ENCODE measurements at regions of chr15 and their contacts with region 1.

Region 1: GRCh38 chr15:68304589-68305337 is 27.2 kb downstream of the FEM1B start:
- DNase-seq: peak; percentile 46
- ATAC-seq: peak; percentile 68
- H3K4me3 Mint-ChIP-seq: no peak overlapping the region
- H3K27ac Mint-ChIP-seq: peak overlapping the region; percentile 55
- H3K4me1 Mint-ChIP-seq: peaks cover 39% of the 10 kb centered on the region
- H3K27me3 Mint-ChIP-seq: no peaks in the 10 kb centered on the region
- CTCF ChIP-seq: no peak

Region 2: GRCh38 chr15:67992834-67993233 is 311.9 kb before region 1 on chr15:
- CTCF ChIA-PET with region 1: no interaction called
- POLR2A ChIA-PET with region 1: no interaction called
- DNase-seq: no peak
- ATAC-seq: peak; percentile 39; the same call in 1 of the 2 replicates
- H3K4me3 Mint-ChIP-seq: no peak overlapping the region
- H3K27ac Mint-ChIP-seq: no peak overlapping the region
- H3K4me1 Mint-ChIP-seq: no peaks in the 10 kb centered on the region
- H3K27me3 Mint-ChIP-seq: peaks cover 3% of the 10 kb centered on the region; the same call in 1 of the 2 replicates
- CTCF ChIP-seq: no peak

Region 3: DNA sequence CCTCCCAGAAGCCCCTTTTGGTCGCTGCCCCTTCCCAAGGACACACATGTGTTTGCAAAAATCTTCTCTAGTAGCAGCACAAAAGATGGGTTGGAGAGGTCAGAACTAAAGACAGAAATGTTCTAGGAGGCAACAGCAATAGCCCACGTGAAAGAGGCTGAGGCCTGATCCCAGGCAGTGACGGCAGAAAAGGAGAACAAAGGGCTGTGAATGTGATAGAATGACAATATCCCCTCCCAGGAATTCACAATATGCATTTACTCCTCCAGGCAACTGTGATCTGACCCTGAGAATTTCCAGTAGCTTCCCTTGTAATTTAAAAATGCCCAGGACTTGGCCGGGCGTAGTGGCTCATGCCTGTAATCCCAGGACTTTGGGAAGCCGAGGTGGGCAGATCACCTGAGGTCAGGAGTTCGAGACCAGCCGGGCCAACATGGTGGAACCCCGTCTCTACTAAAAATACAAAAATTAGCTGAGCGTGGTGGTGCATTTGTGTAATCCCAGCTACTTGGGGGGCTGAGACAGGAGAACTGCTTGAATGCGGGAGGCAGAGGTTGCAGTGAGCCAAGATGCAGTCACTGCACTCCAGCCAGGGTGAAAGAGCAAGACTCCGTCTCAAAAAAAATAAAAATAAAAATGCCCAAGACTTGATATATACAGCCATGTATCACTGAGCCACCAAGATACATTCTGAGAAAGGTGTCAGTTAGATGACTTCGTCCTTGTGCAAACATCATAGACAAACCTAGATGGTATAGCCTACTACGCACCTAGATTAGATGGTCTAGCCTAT is 294.2 kb before region 1 on chr15:
- CTCF ChIA-PET with region 1: no interaction called
- POLR2A ChIA-PET with region 1: no interaction called
- DNase-seq: no peak
- ATAC-seq: peak; percentile 88
- H3K4me3 Mint-ChIP-seq: no peak overlapping the region
- H3K27ac Mint-ChIP-seq: peak overlapping the region; percentile 46; the same call in 1 of the 2 replicates
- H3K4me1 Mint-ChIP-seq: peaks cover 28% of the 10 kb centered on the region
- H3K27me3 Mint-ChIP-seq: no peaks in the 10 kb centered on the region; the same call in 1 of the 2 replicates
- CTCF ChIP-seq: no peak

Region 4: GRCh38 chr15:68177742-68178141 is 127.0 kb before region 1 on chr15:
- CTCF ChIA-PET with region 1: no interaction called
- POLR2A ChIA-PET with region 1: no interaction called
- DNase-seq: no peak
- ATAC-seq: no peak
- H3K4me3 Mint-ChIP-seq: no peak overlapping the region
- H3K27ac Mint-ChIP-seq: peak overlapping the region; percentile 50; the same call in 1 of the 2 replicates
- H3K4me1 Mint-ChIP-seq: no peaks in the 10 kb centered on the region
- H3K27me3 Mint-ChIP-seq: no peaks in the 10 kb centered on the region
- CTCF ChIP-seq: no peak

Region 5: DNA sequence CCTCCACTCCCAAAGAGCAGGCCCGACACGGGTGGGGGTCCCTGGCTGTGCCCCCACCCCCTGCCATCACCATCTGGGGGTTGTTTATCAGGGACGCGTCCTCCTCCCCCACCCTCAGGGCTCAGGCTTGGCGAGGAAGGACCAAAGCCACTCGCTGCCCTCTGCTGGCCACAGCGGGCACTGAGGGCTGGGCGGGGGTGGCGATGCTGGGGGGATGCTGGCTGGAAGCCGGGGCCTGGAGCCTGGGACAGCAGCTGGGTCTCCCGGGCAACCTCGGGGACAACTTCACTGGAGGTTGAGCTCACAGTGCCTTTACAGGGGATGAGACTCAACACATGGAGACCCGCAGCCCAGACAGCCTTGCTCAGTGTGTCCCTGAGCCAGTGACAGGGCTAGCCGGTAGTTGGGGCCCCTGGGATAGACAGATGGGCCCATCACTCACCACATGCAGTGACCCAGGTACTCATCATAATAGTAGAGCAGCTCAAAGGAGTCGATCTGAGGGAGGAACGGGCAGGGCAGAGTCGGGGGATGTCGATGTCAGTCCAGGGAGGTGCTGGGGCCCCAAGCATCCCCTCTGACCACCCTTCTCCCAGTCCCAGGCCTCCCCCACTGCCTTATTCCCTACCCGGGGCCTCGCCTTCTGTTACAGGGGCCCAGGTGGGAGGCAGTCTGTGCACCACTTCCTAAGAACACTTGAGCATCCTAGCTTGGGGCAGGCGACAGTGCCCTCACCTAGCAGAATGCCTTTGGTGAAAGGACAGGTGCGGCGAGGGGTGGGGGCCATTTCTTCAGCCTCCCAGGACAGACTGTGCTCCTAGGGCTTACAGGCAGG is 93.7 kb before region 1 on chr15:
- CTCF ChIA-PET with region 1: interaction called, 15 read pairs
- POLR2A ChIA-PET with region 1: no interaction called
- DNase-seq: peak; percentile 87
- ATAC-seq: peak; percentile 71
- H3K4me3 Mint-ChIP-seq: no peak overlapping the region
- H3K27ac Mint-ChIP-seq: no peak overlapping the region
- H3K4me1 Mint-ChIP-seq: peaks cover 16% of the 10 kb centered on the region
- H3K27me3 Mint-ChIP-seq: no peaks in the 10 kb centered on the region
- CTCF ChIP-seq: peak; percentile 75

Region 6: DNA sequence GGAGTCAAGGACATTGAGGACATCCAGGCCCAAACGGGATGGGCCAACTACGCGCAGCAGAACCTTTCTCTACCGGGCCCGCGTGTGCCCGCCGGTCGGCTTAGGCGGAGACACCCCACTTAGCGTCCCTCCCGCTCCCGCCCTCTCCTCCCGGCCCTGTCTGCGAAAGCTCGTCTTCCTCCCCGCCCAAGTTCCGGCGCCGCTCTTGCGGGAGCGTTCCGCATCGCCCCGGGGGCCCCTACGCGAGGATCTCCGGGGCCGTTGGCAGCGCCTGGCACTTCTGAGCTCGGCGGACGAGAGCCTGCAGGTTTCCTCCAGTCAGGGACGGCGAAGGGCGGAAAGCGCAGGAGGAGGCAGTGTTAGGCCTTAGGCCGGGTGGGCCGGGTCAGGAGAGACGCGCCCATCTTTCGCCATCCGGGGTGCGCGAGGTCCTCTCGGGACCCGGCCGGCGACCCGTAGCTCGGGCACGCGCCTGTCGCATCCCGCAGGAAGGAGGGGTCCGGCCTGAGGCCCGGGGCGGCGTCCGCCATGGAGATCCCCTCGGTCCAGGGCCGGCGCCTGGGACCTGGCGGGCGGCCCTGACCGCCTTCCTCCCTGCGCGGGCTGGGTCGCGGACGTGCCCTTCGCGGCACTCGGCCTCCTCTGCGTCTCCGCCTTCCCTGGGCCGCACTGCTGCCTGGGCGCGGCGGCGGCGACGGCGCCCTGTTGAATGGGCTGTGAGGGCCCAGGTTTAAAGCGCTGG is 27.0 kb before region 1 on chr15 and contains the start of gene FEM1B:
- CTCF ChIA-PET with region 1: interaction called, 28 read pairs
- POLR2A ChIA-PET with region 1: interaction called, 9 read pairs
- DNase-seq: peak; percentile 84
- ATAC-seq: peak; percentile 81
- H3K4me3 Mint-ChIP-seq: peak within 1 kb of the TSS; percentile 98
- H3K27ac Mint-ChIP-seq: peak within 1 kb of the TSS; percentile 99
- H3K4me1 Mint-ChIP-seq: peaks cover 50% of the 10 kb centered on the region
- H3K27me3 Mint-ChIP-seq: no peaks in the 10 kb centered on the region
- CTCF ChIP-seq: no peak
- total RNA-seq, gene FEM1B: 59.7 to 64.8 TPM (median 62.4 TPM) in 3 replicates

Region 7: GRCh38 chr15:68341760-68342725 is 37.3 kb after region 1 on chr15:
- CTCF ChIA-PET with region 1: interaction called, 22 read pairs
- POLR2A ChIA-PET with region 1: no interaction called
- DNase-seq: no peak
- ATAC-seq: no peak
- H3K4me3 Mint-ChIP-seq: no peak overlapping the region
- H3K27ac Mint-ChIP-seq: no peak overlapping the region
- H3K4me1 Mint-ChIP-seq: peaks cover 16% of the 10 kb centered on the region
- H3K27me3 Mint-ChIP-seq: no peaks in the 10 kb centered on the region
- CTCF ChIP-seq: no peak

Region 8: GRCh38 chr15:68389936-68390790 is 85.4 kb after region 1 on chr15:
- CTCF ChIA-PET with region 1: interaction called, 18 read pairs
- POLR2A ChIA-PET with region 1: no interaction called
- DNase-seq: peak; percentile 5
- ATAC-seq: no peak
- H3K4me3 Mint-ChIP-seq: no peak overlapping the region
- H3K27ac Mint-ChIP-seq: no peak overlapping the region
- H3K4me1 Mint-ChIP-seq: no peaks in the 10 kb centered on the region
- H3K27me3 Mint-ChIP-seq: peaks cover 7% of the 10 kb centered on the region
- CTCF ChIP-seq: no peak

Region 9: GRCh38 chr15:68672781-68673205 is 368.0 kb after region 1 on chr15:
- CTCF ChIA-PET with region 1: interaction called, 25 read pairs
- POLR2A ChIA-PET with region 1: no interaction called
- DNase-seq: peak; percentile 49
- ATAC-seq: peak; percentile 71
- H3K4me3 Mint-ChIP-seq: no peak overlapping the region
- H3K27ac Mint-ChIP-seq: no peak overlapping the region
- H3K4me1 Mint-ChIP-seq: peaks cover 11% of the 10 kb centered on the region
- H3K27me3 Mint-ChIP-seq: no peaks in the 10 kb centered on the region
- CTCF ChIP-seq: no peak

Measured in WTC11 (cell line).